ENCODE measurements at regions of chr11 and their contacts with region 1.

Region 1: DNA sequence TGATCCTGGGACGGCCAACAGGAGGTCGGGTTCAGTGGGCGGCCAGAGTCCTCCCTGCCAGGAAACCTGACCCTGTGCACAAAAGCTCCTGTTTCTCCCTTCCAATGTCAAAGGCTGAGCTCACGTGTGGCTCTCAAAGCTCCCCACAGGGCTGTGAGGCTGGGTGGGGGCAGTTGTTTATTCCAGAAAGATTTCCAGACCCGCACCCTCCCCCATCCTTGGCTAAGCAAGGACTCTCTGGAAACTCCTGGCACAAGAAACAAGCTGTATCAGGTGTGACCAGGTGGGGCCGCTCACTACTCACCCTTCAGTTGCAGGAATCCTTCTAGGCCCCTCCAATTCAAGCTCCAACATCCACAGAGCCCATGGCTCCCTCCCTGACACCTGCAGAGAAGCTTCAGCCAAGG is 131.9 kb downstream of the SHANK2 start:
- DNase-seq: peak; percentile 48
- H3K4me3 ChIP-seq: no peak overlapping the region
- H3K27ac ChIP-seq: no peak overlapping the region
- H3K4me1 ChIP-seq: no peaks in the 10 kb centered on the region
- H3K27me3 ChIP-seq: no peaks in the 10 kb centered on the region
- CTCF ChIP-seq: peak; percentile 46 to 63

Region 2: GRCh38 chr11:71372693-71373657 is 252.5 kb after region 1 on chr11:
- CTCF ChIA-PET with region 1: no interaction called
- dilution Hi-C with region 1: no loop called
- in situ Hi-C with region 1: no loop called
- intact Hi-C with region 1: loop called (anchors 1 kb)
- DNase-seq: peak; percentile 17
- H3K4me3 ChIP-seq: no peak overlapping the region
- H3K27ac ChIP-seq: no peak overlapping the region
- H3K4me1 ChIP-seq: no peaks in the 10 kb centered on the region
- H3K27me3 ChIP-seq: peaks cover 2% of the 10 kb centered on the region
- CTCF ChIP-seq: peak; percentile 42 to 59

Region 3: GRCh38 chr11:71454470-71455469 is 334.3 kb after region 1 on chr11:
- CTCF ChIA-PET with region 1: no interaction called
- dilution Hi-C with region 1: no loop called
- in situ Hi-C with region 1: no loop called
- intact Hi-C with region 1: loop called (anchors 1 kb)
- DNase-seq: no peak
- H3K4me3 ChIP-seq: no peak overlapping the region
- H3K27ac ChIP-seq: no peak overlapping the region
- H3K4me1 ChIP-seq: peaks cover 30% of the 10 kb centered on the region
- H3K27me3 ChIP-seq: no peaks in the 10 kb centered on the region
- CTCF ChIP-seq: peak; percentile 19 to 45

Measured in mammary epithelial cell (primary cell).